Heart left ventricle (tissue), 16 donors: ENCODE measurements at regions of chr14 and their contacts with region 1.

Region 1: GRCh38 chr14:32076278-32077080 is 625 bp upstream of the ARHGAP5 start:
- DNase-seq: peak; percentile 97 to 98 (median 97)
- ATAC-seq: peak; percentile 93 to 97 (median 97)
- H3K4me3 ChIP-seq: peak overlapping the region; percentile 75 to 95 (median 92)
- H3K27ac ChIP-seq: peak overlapping the region; percentile 87 to 100 (median 97)
- H3K4me1 ChIP-seq: peaks cover 3 to 45% (median 24%) of the 10 kb centered on the region in 12 donors
- H3K27me3 ChIP-seq: no peaks in the 10 kb centered on the region
- CTCF ChIP-seq: no peak
- POLR2A ChIP-seq: peak in 1 of 2 donors; percentile 46

Region 2: GRCh38 chr14:31510222-31510621 is 566.3 kb before region 1 on chr14:
- intact Hi-C with region 1: loop called in 2 of 10 experiments (anchors 5 to 10 kb)
- DNase-seq: no peak
- ATAC-seq: peak in 1 of 4 donors; percentile 22
- H3K4me3 ChIP-seq: no peak overlapping the region
- H3K27ac ChIP-seq: no peak overlapping the region
- H3K4me1 ChIP-seq: peaks cover 0 to 13% (median 8%) of the 10 kb centered on the region in 12 donors
- H3K27me3 ChIP-seq: no peaks in the 10 kb centered on the region
- CTCF ChIP-seq: peak; percentile 52 to 90 (median 68)
- POLR2A ChIP-seq: no peak

Region 3: DNA sequence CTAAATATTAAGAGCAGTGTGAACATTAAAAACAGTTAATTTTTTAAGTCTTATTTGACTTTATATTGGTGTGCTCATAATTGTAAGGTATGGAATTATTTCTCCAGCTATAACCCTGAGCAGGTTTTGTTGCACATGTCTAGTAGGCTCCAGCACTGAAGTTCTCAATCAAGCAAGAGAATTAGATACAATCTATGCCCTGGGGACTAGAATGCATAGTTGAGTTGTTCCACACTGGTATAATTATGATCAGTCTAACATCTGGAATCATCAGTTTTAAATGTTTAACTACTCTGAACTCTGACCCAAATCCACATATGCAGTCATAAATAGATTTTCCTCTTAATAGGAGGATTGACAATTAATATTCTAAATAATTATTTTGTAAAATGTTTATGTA is 257.2 kb before region 1 on chr14:
- intact Hi-C with region 1: no loop called
- DNase-seq: no peak
- ATAC-seq: no peak
- H3K4me3 ChIP-seq: no peak overlapping the region
- H3K27ac ChIP-seq: no peak overlapping the region
- H3K4me1 ChIP-seq: peaks cover 0 to 4% (median 0%) of the 10 kb centered on the region in 12 donors
- H3K27me3 ChIP-seq: no peaks in the 10 kb centered on the region
- CTCF ChIP-seq: no peak
- POLR2A ChIP-seq: no peak

Region 4: DNA sequence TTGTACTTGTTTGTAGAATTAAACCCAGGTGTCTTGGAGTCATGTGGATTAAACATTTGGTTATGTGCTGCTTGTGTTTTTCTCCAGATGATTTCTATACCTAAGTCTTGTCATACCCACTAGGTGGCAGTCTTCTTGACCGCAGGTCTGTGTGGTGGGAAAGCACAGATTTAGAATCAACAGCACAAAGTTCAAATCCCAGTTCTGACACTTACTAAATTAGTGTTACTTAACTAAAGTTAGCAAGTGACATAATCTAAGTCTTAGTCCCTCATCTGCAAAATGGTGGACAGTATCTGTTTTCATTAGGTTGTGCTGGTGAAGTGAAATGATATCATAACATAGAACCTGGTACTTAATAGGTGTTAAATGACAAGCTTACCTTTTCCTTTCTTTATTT is 150.4 kb before region 1 on chr14:
- intact Hi-C with region 1: loop called in 5 of 10 experiments (anchors 2 to 10 kb)
- DNase-seq: no peak
- ATAC-seq: no peak
- H3K4me3 ChIP-seq: no peak overlapping the region
- H3K27ac ChIP-seq: peak overlapping the region; percentile 6 to 91 (median 80)
- H3K4me1 ChIP-seq: peaks cover 6 to 42% (median 25%) of the 10 kb centered on the region in 12 donors
- H3K27me3 ChIP-seq: no peaks in the 10 kb centered on the region
- CTCF ChIP-seq: peak; percentile 28 to 61 (median 44)
- POLR2A ChIP-seq: no peak

Region 5: DNA sequence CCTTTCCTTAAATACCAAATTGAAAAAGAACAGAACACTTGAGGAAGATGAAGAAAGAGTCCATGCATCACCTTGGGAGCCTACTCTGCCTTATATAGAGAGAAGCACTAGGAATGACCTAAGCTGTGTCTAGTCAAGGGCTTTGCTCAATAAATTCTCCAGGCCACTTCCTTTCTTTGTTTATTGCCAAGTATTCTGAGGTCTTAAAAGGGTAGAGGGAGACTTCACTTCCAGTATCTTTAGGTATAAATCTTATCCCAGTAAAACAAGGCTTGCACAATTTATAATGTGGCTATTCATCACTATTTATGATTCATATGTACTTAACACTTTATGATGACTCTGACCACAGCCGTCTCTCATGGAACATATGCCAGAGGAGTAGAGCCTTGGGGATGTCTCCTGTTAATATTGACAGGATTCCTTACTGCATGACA is 84.5 kb before region 1 on chr14:
- intact Hi-C with region 1: loop called in 1 of 10 experiments (anchors 10 kb)
- DNase-seq: no peak
- ATAC-seq: no peak
- H3K4me3 ChIP-seq: no peak overlapping the region
- H3K27ac ChIP-seq: peak overlapping the region in 2 of 12 donors; percentile 33 to 51
- H3K4me1 ChIP-seq: peaks cover 0 to 52% (median 16%) of the 10 kb centered on the region in 12 donors
- H3K27me3 ChIP-seq: no peaks in the 10 kb centered on the region
- CTCF ChIP-seq: no peak
- POLR2A ChIP-seq: no peak

Region 6: GRCh38 chr14:32009976-32010863 is 66.3 kb before region 1 on chr14:
- intact Hi-C with region 1: no loop called
- DNase-seq: no peak
- ATAC-seq: peak in 1 of 4 donors; percentile 25
- H3K4me3 ChIP-seq: no peak overlapping the region
- H3K27ac ChIP-seq: peak overlapping the region in 5 of 12 donors; percentile 4 to 58 (median 7)
- H3K4me1 ChIP-seq: peaks cover 0 to 47% (median 9%) of the 10 kb centered on the region in 12 donors
- H3K27me3 ChIP-seq: no peaks in the 10 kb centered on the region
- CTCF ChIP-seq: no peak
- POLR2A ChIP-seq: no peak

Region 7: DNA sequence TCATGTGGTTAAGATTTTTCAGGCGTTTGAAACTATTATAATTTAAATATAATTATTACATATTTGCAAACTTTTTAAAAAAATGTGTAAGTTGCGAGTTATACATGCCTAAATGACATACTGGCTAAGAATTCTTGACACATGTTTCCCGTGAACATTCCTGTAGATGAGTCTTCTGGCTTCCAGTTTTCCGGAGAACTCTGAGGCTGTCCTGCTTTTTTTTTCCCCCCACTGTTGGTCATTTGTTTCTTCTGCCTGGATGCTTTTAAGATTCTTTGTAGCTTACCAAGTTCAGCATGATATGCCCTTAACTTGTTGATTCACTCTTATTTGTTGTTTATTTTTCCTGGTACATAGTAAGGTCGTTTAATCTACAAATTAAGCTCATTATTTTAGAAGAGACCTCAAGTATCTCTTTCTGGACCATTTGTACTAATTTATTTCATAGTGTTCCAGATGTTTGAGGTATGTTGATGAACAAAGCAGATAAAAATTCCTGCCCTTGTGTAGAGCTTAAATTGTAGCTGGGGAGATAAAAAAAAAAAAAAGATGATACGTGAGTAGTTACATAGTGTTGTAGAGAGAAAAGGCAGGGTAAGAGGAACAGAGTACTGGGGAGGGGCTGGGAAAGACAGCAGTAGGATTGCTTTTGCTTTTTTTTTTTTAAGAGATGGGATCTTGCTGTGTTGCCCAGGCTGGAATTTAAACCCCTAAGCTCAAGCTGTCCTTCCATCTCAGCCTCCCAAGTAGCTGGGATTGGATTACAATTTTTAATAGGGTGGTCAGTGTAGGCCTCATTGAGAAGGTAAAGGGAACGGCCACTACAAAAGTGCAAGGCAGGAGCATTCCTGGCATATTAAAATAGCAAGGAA is 33.4 kb after region 1 on chr14:
- intact Hi-C with region 1: loop called in 1 of 10 experiments (anchors 5 kb)
- DNase-seq: no peak
- ATAC-seq: no peak
- H3K4me3 ChIP-seq: no peak overlapping the region
- H3K27ac ChIP-seq: no peak overlapping the region
- H3K4me1 ChIP-seq: peaks cover 0 to 58% (median 12%) of the 10 kb centered on the region in 12 donors
- H3K27me3 ChIP-seq: no peaks in the 10 kb centered on the region
- CTCF ChIP-seq: no peak
- POLR2A ChIP-seq: no peak

Region 8: GRCh38 chr14:32252030-32252670 is 175.7 kb after region 1 on chr14:
- intact Hi-C with region 1: loop called (anchors 1 to 5 kb)
- DNase-seq: peak in 3 of 5 donors; percentile 37 to 56 (median 39)
- ATAC-seq: peak; percentile 63 to 84 (median 83)
- H3K4me3 ChIP-seq: no peak overlapping the region
- H3K27ac ChIP-seq: peak overlapping the region in 4 of 12 donors; percentile 0 to 63 (median 20)
- H3K4me1 ChIP-seq: peaks cover 0 to 30% (median 12%) of the 10 kb centered on the region in 12 donors
- H3K27me3 ChIP-seq: no peaks in the 10 kb centered on the region
- CTCF ChIP-seq: peak; percentile 66 to 90 (median 83)
- POLR2A ChIP-seq: no peak

Region 9: GRCh38 chr14:32560209-32560857 is 483.9 kb after region 1 on chr14:
- intact Hi-C with region 1: loop called in 3 of 10 experiments (anchors 5 to 10 kb)
- DNase-seq: peak in 3 of 5 donors; percentile 29 to 42 (median 39)
- ATAC-seq: peak; percentile 46 to 83 (median 73)
- H3K4me3 ChIP-seq: no peak overlapping the region
- H3K27ac ChIP-seq: peak overlapping the region in 10 of 12 donors; percentile 9 to 71 (median 44)
- H3K4me1 ChIP-seq: peaks cover 0 to 54% (median 21%) of the 10 kb centered on the region in 12 donors
- H3K27me3 ChIP-seq: no peaks in the 10 kb centered on the region
- CTCF ChIP-seq: peak; percentile 67 to 92 (median 80)
- POLR2A ChIP-seq: no peak